ENCODE measurements at regions of chr16 and their contacts with region 1.

Region 1: GRCh38 chr16:4402439-4403132 is 13.8 kb downstream of the CORO7 start:
- DNase-seq: peak; percentile 76 to 98 (median 89)

Region 2: GRCh38 chr16:3536271-3536731 is 866.3 kb before region 1 on chr16:
- intact Hi-C with region 1: no loop called
- DNase-seq: no peak

Region 3: GRCh38 chr16:4271176-4272066 is 131.2 kb before region 1 on chr16:
- intact Hi-C with region 1: loop called (anchors 5 kb)
- DNase-seq: peak; percentile 90 to 99 (median 96)

Region 4: DNA sequence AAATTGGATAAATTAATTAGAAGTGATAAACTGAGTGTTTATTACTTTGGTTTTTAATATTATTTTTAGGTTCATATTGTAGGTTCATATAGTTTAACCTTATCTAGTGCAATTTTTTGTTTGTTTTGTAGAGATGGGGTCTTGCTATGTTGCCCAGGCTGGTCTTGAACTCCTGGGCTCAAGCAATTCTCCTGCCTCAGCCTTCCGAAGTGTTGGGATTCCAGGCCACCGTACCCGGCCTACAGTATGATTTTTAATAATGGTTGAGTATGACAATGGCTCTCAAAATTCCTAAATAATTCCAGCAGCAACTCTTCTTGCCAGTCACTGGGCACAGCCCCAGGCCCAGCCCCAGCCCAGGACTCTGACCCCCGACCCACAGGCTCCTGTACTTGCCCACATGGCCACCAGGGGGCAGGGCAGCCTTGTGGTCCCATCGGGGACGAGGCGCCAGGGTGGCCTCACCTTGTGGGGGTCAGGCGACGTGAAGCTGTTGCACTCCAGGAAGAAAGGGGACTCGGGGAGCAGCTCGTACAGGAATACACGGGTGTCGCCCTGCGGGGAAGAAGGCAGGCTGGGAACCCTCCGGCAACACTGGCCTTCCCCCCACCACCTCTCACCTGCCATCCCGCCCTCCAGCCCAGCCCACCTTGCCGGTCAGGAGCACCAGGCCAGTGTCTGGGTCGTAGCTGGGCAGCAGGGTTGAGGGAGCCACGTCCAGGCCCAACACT is 43.6 kb before region 1 on chr16:
- intact Hi-C with region 1: loop called (anchors 1 kb)
- DNase-seq: peak in 8 of 10 donors; percentile 62 to 93 (median 68)

Measured in posterior cingulate gyrus (tissue), 11 donors.